ENCODE measurements at regions of chr17 and their contacts with region 1.

Region 1: GRCh38 chr17:80454557-80455335 is 21.7 kb downstream of the NPTX1 start:
- DNase-seq: peak; percentile 97
- ATAC-seq: peak; percentile 92
- H3K4me3 Mint-ChIP-seq: peak overlapping the region; percentile 96
- H3K27ac Mint-ChIP-seq: peak overlapping the region; percentile 97
- H3K4me1 Mint-ChIP-seq: peaks cover 30% of the 10 kb centered on the region
- H3K27me3 Mint-ChIP-seq: peaks cover 7% of the 10 kb centered on the region

Region 2: DNA sequence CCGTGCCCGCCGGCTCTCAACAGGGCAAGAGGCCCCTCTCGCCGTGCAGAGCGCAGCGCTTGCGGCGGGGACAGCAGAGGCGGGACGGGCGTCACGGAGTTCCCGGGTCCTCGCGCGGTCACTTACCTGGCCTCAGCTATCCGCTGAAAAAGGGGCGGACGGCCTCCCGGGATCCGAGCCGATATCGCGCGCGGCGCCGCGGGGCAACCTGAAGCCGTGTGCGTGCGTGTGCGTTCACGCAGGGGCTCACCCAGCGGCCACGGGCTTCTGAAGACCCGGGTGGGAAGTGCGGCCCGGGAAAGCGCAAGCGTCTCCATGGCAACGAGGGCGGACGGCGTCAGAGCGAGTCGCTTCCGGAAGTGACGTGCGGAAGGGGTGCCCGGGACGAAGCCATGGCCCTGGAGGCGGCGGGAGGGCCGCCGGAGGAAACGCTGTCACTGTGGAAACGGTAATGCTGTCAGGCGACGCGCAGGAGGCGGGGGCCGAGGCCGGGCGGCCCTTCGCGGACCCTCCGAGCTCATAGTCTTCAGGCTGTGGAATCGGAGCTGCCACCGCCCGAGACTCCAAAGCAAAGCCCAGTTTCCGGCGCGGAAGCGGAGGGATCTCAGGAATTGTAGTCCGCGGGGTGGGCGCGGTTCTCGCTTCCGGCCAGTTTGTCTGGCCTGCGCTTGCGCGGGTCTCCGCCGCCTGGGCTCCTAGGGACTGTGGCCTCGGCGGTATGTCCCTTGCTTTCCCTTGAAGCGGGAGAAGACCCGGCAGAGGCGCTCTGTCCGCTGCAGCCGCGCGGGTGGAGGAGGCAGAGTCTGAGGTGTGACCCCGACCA is 39.7 kb before region 1 on chr17 and contains the start of gene ENDOV:
- POLR2A ChIA-PET with region 1: interaction called, 14 read pairs
- DNase-seq: peak; percentile 90
- ATAC-seq: peak; percentile 91
- H3K4me3 Mint-ChIP-seq: peak within 1 kb of the TSS; percentile 84
- H3K27ac Mint-ChIP-seq: peak within 1 kb of the TSS; percentile 73
- H3K4me1 Mint-ChIP-seq: peaks cover 14% of the 10 kb centered on the region
- H3K27me3 Mint-ChIP-seq: peaks cover 30% of the 10 kb centered on the region
- total RNA-seq, gene ENDOV: 17.8 to 23.1 TPM

Region 3: GRCh38 chr17:80465327-80465974 is 10.7 kb after region 1 on chr17:
- POLR2A ChIA-PET with region 1: interaction called, 24 read pairs
- DNase-seq: no peak
- ATAC-seq: no peak
- H3K4me3 Mint-ChIP-seq: no peak overlapping the region
- H3K27ac Mint-ChIP-seq: no peak overlapping the region
- H3K4me1 Mint-ChIP-seq: peaks cover 4% of the 10 kb centered on the region
- H3K27me3 Mint-ChIP-seq: peaks cover 39% of the 10 kb centered on the region

Region 4: DNA sequence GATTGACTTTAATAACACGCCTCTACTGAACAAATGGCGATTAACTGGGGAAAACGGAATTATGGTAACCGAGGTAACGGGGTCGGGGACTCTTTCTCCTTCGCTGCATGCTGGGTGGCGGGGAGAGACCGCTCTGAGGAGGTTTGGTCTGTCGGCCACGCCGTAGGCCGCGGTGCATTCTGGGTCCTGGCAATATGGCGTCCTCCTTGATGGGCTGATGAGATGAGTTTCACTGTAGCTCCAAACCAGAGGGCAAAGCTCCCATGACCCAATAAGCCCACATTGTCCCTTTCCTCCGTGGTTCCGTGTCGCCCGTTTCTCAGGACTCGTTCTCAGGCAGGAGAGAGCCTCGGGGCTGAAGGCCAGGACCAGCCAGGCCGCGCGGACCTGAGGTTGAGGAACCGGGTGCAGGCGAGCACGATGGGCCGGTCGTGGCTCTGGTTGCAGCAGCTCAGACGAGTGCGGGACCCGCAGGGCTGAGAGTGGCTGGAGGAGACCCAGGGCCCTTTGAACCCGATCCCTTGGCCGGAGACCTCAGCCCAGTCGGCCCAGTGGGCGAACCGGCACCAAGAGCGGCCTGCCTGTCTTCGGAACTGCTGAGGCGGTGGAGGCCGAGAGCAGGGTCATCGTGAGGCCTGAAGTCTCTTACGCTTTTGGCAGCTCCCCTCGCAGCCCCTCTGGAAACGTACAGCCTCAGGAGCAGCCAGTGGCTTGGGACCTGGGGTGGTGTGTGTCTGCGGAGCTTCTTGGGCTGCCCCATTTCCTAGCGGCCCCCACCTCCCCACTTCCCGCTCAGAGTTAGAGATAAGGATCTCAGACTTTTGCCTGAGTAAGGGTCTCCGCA is 90.1 kb after region 1 on chr17 and contains the start of gene RPTOR:
- POLR2A ChIA-PET with region 1: interaction called, 16 read pairs
- DNase-seq: peak; percentile 91
- ATAC-seq: peak; percentile 98
- H3K4me3 Mint-ChIP-seq: peak within 1 kb of the TSS; percentile 94
- H3K27ac Mint-ChIP-seq: peak within 1 kb of the TSS; percentile 93
- H3K4me1 Mint-ChIP-seq: peaks cover 13% of the 10 kb centered on the region
- H3K27me3 Mint-ChIP-seq: peaks cover 4% of the 10 kb centered on the region
- total RNA-seq, gene RPTOR: 43.2 to 43.8 TPM